CD14-positive monocyte (primary cell): ENCODE measurements at regions of chr7 and their contacts with region 1.

Region 1: GRCh38 chr7:44638611-44639557 is 32.5 kb downstream of the OGDH start:
- DNase-seq: peak; percentile 90 to 93 (median 92)
- H3K4me3 ChIP-seq: peak overlapping the region in 1 of 3 experiments; percentile 42
- H3K4me3 Mint-ChIP-seq: peak overlapping the region; percentile 66 to 86
- H3K27ac ChIP-seq: peak overlapping the region; percentile 97 to 100
- H3K27ac Mint-ChIP-seq: peak overlapping the region; percentile 100
- H3K4me1 ChIP-seq: peaks cover 66 to 68% of the 10 kb centered on the region in 2 donors
- H3K4me1 Mint-ChIP-seq: peaks cover 66% of the 10 kb centered on the region
- H3K27me3 ChIP-seq: no peaks in the 10 kb centered on the region
- H3K27me3 Mint-ChIP-seq: no peaks in the 10 kb centered on the region
- CTCF ChIP-seq: peak; percentile 19

Region 2: GRCh38 chr7:44581879-44582603 is 56.8 kb before region 1 on chr7 and contains the start of gene TMED4:
- intact Hi-C with region 1: loop called in 1 of 2 experiments (anchors 10 kb)
- DNase-seq: peak; percentile 99
- H3K4me3 ChIP-seq: peak within 1 kb of the TSS; percentile 69 to 90 (median 81)
- H3K4me3 Mint-ChIP-seq: peak within 1 kb of the TSS; percentile 87 to 95
- H3K27ac ChIP-seq: peak within 1 kb of the TSS; percentile 94 to 99
- H3K27ac Mint-ChIP-seq: peak within 1 kb of the TSS; percentile 97 to 99 (median 99)
- H3K4me1 ChIP-seq: peaks cover 18 to 22% of the 10 kb centered on the region in 2 donors
- H3K4me1 Mint-ChIP-seq: peaks cover 20% of the 10 kb centered on the region
- H3K27me3 ChIP-seq: no peaks in the 10 kb centered on the region
- H3K27me3 Mint-ChIP-seq: no peaks in the 10 kb centered on the region
- CTCF ChIP-seq: no peak
- polyA plus RNA-seq, gene TMED4: 45.7 to 76.7 (median 49.0) TPM

Region 3: DNA sequence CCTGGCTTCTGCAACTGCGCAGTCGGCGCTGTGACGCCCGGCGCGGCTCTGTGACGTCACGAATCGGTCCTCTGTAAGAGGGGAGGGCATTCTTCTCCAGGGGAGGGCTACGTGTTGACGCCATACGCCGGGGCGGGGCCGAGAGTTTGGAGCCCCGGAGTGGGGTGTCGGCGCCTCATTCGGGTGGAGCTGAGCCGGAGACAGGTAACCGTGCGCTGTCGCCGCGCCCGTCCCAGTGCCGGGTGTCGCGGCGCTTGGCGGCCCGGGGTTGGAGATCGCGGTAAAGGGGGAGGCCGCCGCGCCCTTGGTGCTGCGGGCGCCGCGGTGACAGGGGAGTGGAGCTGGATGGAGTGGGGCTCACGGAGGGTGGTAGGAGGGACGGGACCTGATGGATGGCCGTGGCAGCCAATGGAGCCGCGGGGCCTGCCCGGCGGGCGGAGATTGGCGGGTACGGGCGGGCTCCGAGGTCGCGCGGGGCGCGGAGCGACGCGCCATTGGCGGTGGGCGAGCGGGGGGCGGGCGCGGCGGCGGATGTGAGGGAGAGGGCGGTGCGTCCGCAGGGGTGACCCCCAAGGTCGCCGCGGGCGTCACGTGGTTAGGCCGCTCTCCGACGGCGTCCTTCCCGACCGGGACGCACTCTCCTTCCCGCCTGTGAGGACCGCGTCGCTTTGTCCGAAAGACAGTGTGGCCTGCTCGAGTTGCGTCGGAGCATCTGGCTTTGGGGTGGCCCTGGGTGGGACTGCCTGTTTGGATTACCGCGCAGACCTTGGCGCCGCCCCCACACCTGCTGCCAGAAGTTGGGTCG is 32.2 kb before region 1 on chr7 and contains the start of gene OGDH:
- intact Hi-C with region 1: loop called in 1 of 2 experiments (anchors 5 kb)
- DNase-seq: peak; percentile 98 to 99 (median 99)
- H3K4me3 ChIP-seq: peak within 1 kb of the TSS; percentile 63 to 87 (median 82)
- H3K4me3 Mint-ChIP-seq: peak within 1 kb of the TSS; percentile 84 to 97
- H3K27ac ChIP-seq: peak within 1 kb of the TSS; percentile 90 to 96
- H3K27ac Mint-ChIP-seq: peak within 1 kb of the TSS; percentile 98 to 100 (median 99)
- H3K4me1 ChIP-seq: peaks cover 33 to 42% of the 10 kb centered on the region in 2 donors
- H3K4me1 Mint-ChIP-seq: peaks cover 40% of the 10 kb centered on the region
- H3K27me3 ChIP-seq: peaks cover 0 to 8% of the 10 kb centered on the region in 2 donors
- H3K27me3 Mint-ChIP-seq: peaks cover 3 to 8% (median 5%) of the 10 kb centered on the region in 3 donors
- CTCF ChIP-seq: no peak
- polyA plus RNA-seq, gene OGDH: 41.0 to 74.1 (median 49.9) TPM